ENCODE measurements at regions of chr3 and their contacts with region 1.

Region 1: DNA sequence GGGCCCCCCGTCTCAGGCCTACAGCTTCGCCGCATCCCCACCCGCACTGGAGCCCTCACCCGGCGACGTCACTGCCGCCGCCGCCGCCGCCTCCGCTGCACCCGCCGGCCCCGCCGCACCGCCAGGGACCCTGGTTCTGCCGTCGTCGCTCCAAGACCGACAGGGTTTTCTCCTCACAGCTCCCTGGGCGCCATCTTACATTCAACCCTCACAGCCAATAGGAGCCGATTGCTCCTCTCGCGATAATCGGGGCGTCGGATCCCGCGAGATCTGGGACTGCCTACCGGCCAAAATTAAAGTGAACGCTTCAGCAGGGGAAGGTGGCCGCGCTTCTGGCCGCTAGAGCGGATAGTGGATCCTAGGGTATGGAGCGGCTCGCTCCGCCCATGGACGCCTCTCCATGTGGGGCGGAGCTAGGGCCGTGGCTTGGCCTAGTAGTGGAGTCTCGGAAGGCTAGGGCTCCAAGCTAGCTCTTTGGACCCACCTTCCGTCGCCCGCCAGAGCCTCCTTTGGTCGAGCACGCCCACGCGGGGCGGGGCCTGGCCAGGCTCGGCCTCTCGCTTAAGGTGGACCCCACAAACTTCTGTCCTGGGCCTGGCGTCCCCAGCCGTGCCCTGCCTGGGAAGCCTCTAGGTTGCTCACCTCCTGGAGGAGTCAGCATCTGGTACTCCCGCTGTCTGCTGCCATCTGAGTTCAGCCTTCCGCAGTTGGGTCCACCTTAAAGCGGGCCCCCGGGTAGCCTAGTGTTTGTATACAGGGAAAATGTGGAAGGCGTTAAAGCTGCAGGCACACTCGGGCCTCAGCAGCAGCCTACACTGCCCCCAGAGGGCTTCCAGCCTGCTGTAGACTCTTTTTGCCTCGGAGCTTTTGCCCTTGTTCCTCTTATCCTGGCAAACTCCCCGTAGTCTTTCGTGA is at the start of gene QRICH1:
- DNase-seq: peak; percentile 91 to 98 (median 94)
- ATAC-seq: peak; percentile 76
- H3K4me3 ChIP-seq: peak within 1 kb of the TSS; percentile 87
- H3K4me3 Mint-ChIP-seq: peak within 1 kb of the TSS; percentile 96
- H3K27ac ChIP-seq: peak within 1 kb of the TSS; percentile 74 to 93
- H3K27ac Mint-ChIP-seq: peak within 1 kb of the TSS; percentile 95
- H3K4me1 ChIP-seq: peaks cover 43% of the 10 kb centered on the region
- H3K4me1 Mint-ChIP-seq: peaks cover 46% of the 10 kb centered on the region
- H3K27me3 ChIP-seq: no peaks in the 10 kb centered on the region
- H3K27me3 Mint-ChIP-seq: no peaks in the 10 kb centered on the region
- CTCF ChIP-seq: peak; percentile 57
- total RNA-seq, gene QRICH1: 210 to 255 TPM

Region 2: GRCh38 chr3:48847504-48848423 is 246.3 kb before region 1 on chr3 and contains the start of gene PRKAR2A:
- CTCF ChIA-PET with region 1: no interaction called
- POLR2A ChIA-PET with region 1: interaction called, 12 read pairs
- intact Hi-C with region 1: no loop called
- DNase-seq: peak; percentile 56 to 92 (median 77)
- ATAC-seq: peak; percentile 61
- H3K4me3 ChIP-seq: peak within 1 kb of the TSS; percentile 75
- H3K4me3 Mint-ChIP-seq: peak within 1 kb of the TSS; percentile 96
- H3K27ac ChIP-seq: peak within 1 kb of the TSS; percentile 57 to 66
- H3K27ac Mint-ChIP-seq: peak within 1 kb of the TSS; percentile 97
- H3K4me1 ChIP-seq: peaks cover 31% of the 10 kb centered on the region
- H3K4me1 Mint-ChIP-seq: peaks cover 34% of the 10 kb centered on the region
- H3K27me3 ChIP-seq: no peaks in the 10 kb centered on the region
- H3K27me3 Mint-ChIP-seq: no peaks in the 10 kb centered on the region
- CTCF ChIP-seq: no peak
- total RNA-seq, gene PRKAR2A: 47.4 to 48.3 TPM

Region 3: DNA sequence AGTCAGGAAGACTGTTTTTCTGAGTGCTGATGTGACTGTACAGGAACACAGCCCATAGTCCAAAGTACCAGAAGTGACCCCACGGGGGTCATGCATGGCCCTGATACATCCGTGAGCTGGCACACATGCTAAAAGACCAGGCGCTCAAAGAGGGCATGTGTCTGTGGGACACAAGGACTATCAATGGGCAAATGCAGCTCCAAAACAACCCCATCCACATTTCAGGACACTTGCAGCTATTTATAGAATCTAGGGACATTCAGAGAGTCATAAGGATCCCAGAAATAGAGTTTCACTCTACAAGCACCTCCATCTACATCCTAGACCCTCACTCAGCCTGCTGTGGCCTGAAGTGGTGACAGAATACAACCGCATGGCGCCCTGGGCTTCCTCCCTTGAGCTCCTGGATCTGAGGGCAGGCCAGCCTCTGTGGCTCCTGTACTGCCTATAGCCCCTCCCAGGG is 212.4 kb before region 1 on chr3:
- CTCF ChIA-PET with region 1: no interaction called
- POLR2A ChIA-PET with region 1: no interaction called
- intact Hi-C with region 1: no loop called
- DNase-seq: no peak
- ATAC-seq: no peak
- H3K4me3 ChIP-seq: no peak overlapping the region
- H3K4me3 Mint-ChIP-seq: no peak overlapping the region
- H3K27ac ChIP-seq: no peak overlapping the region
- H3K27ac Mint-ChIP-seq: no peak overlapping the region
- H3K4me1 ChIP-seq: no peaks in the 10 kb centered on the region
- H3K4me1 Mint-ChIP-seq: peaks cover 7% of the 10 kb centered on the region
- H3K27me3 ChIP-seq: no peaks in the 10 kb centered on the region
- H3K27me3 Mint-ChIP-seq: no peaks in the 10 kb centered on the region
- CTCF ChIP-seq: no peak

Region 4: GRCh38 chr3:49021813-49022687 is 72.1 kb before region 1 on chr3 and contains the start of gene NDUFAF3:
- CTCF ChIA-PET with region 1: interaction called, 24 read pairs
- POLR2A ChIA-PET with region 1: interaction called, 74 read pairs
- intact Hi-C with region 1: loop called (anchors 1 to 5 kb)
- DNase-seq: peak; percentile 81 to 95 (median 90)
- ATAC-seq: peak; percentile 74
- H3K4me3 ChIP-seq: peak within 1 kb of the TSS; percentile 80
- H3K4me3 Mint-ChIP-seq: peak within 1 kb of the TSS; percentile 95
- H3K27ac ChIP-seq: peak within 1 kb of the TSS; percentile 92 to 98
- H3K27ac Mint-ChIP-seq: peak within 1 kb of the TSS; percentile 90
- H3K4me1 ChIP-seq: peaks cover 63% of the 10 kb centered on the region
- H3K4me1 Mint-ChIP-seq: peaks cover 50% of the 10 kb centered on the region
- H3K27me3 ChIP-seq: no peaks in the 10 kb centered on the region
- H3K27me3 Mint-ChIP-seq: no peaks in the 10 kb centered on the region
- CTCF ChIP-seq: peak; percentile 99
- total RNA-seq, gene NDUFAF3: 52.7 to 53.2 TPM

Region 5: GRCh38 chr3:49104483-49105291 is 10.6 kb after region 1 on chr3 and contains the start of gene QARS1:
- CTCF ChIA-PET with region 1: interaction called, 20 read pairs
- POLR2A ChIA-PET with region 1: interaction called, 77 read pairs
- intact Hi-C with region 1: loop called (anchors 1 kb)
- DNase-seq: peak; percentile 79 to 93 (median 85)
- ATAC-seq: peak; percentile 99
- H3K4me3 ChIP-seq: peak within 1 kb of the TSS; percentile 98
- H3K4me3 Mint-ChIP-seq: peak within 1 kb of the TSS; percentile 99
- H3K27ac ChIP-seq: peak within 1 kb of the TSS; percentile 71 to 78
- H3K27ac Mint-ChIP-seq: peak within 1 kb of the TSS; percentile 99
- H3K4me1 ChIP-seq: peaks cover 25% of the 10 kb centered on the region
- H3K4me1 Mint-ChIP-seq: peaks cover 31% of the 10 kb centered on the region
- H3K27me3 ChIP-seq: no peaks in the 10 kb centered on the region
- H3K27me3 Mint-ChIP-seq: no peaks in the 10 kb centered on the region
- CTCF ChIP-seq: no peak
- total RNA-seq, gene QARS1: 264 to 287 TPM

Region 6: DNA sequence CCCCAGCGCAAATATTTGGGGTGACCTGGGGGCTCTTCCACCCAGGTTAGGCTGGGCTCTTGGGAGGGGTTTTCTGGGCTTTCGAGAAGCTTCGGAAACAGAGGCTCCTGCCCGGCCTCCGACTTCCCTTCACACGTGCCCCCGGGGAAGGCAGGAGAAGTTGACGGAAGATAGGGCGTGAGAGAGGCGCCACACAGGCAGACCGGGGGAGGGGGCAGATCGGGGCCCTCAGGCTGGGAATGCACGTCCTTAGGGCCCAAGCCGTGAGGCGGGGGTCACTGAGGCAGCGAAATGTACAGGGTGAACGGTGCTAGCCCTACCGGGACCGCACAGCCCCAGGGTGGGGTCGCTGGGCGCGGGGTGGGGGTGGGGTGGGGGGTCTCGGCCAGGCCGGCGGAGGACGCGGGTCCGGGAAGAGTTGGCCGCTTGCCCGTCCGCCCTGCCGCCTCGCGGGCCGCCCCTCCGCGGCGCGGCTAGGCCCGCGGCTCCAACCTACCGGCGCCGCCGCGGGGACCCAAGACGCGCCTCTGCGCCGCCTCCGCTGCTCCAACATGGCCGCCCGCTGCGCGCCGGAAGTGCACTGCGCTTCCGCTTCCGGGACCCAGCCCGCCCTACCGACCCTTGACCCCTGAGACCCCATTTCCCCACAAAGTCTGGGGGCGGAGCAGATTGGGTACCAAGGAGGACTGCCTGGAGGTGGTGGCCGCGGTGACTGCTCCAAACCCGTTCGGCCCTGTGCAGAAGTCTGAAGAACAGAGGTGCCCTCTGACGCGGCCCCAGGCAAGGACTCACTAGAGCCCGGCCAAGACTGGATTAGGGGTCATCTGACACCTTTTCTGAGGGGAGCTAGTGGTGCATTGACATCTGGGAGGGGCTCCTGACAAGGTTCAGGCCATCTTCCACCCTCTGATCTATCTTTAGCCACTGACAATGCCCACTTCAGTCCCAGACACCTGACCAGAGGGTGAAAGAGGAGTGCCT is 72.0 kb after region 1 on chr3 and contains the start of gene CCDC71:
- CTCF ChIA-PET with region 1: interaction called, 6 read pairs
- POLR2A ChIA-PET with region 1: interaction called, 20 read pairs
- intact Hi-C with region 1: loop called in 1 of 2 experiments (anchors 1 kb)
- DNase-seq: peak; percentile 55 to 89 (median 70)
- ATAC-seq: peak; percentile 80
- H3K4me3 ChIP-seq: peak within 1 kb of the TSS; percentile 94
- H3K4me3 Mint-ChIP-seq: peak within 1 kb of the TSS; percentile 97
- H3K27ac ChIP-seq: peak within 1 kb of the TSS; percentile 48 to 61
- H3K27ac Mint-ChIP-seq: peak within 1 kb of the TSS; percentile 91
- H3K4me1 ChIP-seq: peaks cover 31% of the 10 kb centered on the region
- H3K4me1 Mint-ChIP-seq: peaks cover 44% of the 10 kb centered on the region
- H3K27me3 ChIP-seq: no peaks in the 10 kb centered on the region
- H3K27me3 Mint-ChIP-seq: no peaks in the 10 kb centered on the region
- CTCF ChIP-seq: no peak
- total RNA-seq, gene CCDC71: 14.7 to 16.0 TPM

Region 7: GRCh38 chr3:49411968-49412631 is 318.0 kb after region 1 on chr3 and contains the starts of genes RHOA and TCTA:
- CTCF ChIA-PET with region 1: no interaction called
- POLR2A ChIA-PET with region 1: interaction called, 25 read pairs
- intact Hi-C with region 1: loop called (anchors 1 kb)
- DNase-seq: peak; percentile 97 to 100 (median 99)
- ATAC-seq: peak; percentile 84
- H3K4me3 ChIP-seq: peak within 1 kb of the TSS; percentile 75
- H3K4me3 Mint-ChIP-seq: peak within 1 kb of the TSS; percentile 96
- H3K27ac ChIP-seq: peak within 1 kb of the TSS; percentile 94 to 95
- H3K27ac Mint-ChIP-seq: peak within 1 kb of the TSS; percentile 97
- H3K4me1 ChIP-seq: peaks cover 75% of the 10 kb centered on the region
- H3K4me1 Mint-ChIP-seq: peaks cover 70% of the 10 kb centered on the region
- H3K27me3 ChIP-seq: no peaks in the 10 kb centered on the region
- H3K27me3 Mint-ChIP-seq: no peaks in the 10 kb centered on the region
- CTCF ChIP-seq: no peak
- total RNA-seq, gene RHOA: 256 to 271 TPM
- total RNA-seq, gene TCTA: 21.4 to 22.0 TPM

Region 8: DNA sequence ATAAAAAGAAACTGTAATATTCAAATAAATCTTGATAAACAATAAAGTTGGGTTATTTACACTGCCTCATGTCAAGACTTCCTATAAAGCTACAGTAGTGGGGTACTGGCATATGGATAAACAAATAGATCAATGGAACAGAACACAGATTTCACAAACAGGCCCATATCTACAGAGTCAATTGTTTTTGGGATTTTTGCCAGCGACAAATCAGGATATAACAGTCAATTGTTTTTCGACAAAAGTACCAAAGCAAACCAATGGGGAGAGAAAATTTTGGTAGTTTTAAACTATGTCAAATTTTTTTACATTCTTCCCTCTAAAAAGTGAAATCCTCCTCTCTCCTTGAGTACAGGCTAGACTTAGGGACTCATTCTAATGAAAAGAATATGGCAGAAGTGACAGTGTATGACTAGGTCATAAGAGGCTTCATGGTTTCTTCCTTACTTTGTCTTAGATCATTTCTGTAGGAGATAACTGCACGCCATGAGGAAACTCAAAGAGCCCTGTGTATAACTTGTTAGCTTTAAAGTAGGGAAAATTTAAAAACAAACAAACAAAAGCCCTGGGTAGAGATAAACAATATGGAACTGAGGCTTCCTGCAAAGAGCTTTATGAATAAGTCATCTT is 675.3 kb after region 1 on chr3:
- CTCF ChIA-PET with region 1: no interaction called
- POLR2A ChIA-PET with region 1: no interaction called
- intact Hi-C with region 1: no loop called
- DNase-seq: no peak
- ATAC-seq: no peak
- H3K4me3 ChIP-seq: no peak overlapping the region
- H3K4me3 Mint-ChIP-seq: no peak overlapping the region
- H3K27ac ChIP-seq: no peak overlapping the region
- H3K27ac Mint-ChIP-seq: no peak overlapping the region
- H3K4me1 ChIP-seq: peaks cover 7% of the 10 kb centered on the region
- H3K4me1 Mint-ChIP-seq: peaks cover 38% of the 10 kb centered on the region
- H3K27me3 ChIP-seq: no peaks in the 10 kb centered on the region
- H3K27me3 Mint-ChIP-seq: no peaks in the 10 kb centered on the region
- CTCF ChIP-seq: no peak

Measured in CD4-positive, alpha-beta T cell (primary cell).